PC-3 (cell line): ENCODE measurements at regions of chr5 and their contacts with region 1.

Region 1: GRCh38 chr5:4879693-4880303 is 260.3 kb upstream of the ADAMTS16 start:
- DNase-seq: peak; percentile 88
- ATAC-seq: peak; percentile 86
- H3K4me3 ChIP-seq: no peak overlapping the region
- H3K27ac ChIP-seq: no peak overlapping the region
- H3K4me1 ChIP-seq: no peaks in the 10 kb centered on the region
- H3K27me3 ChIP-seq: peaks cover 64% of the 10 kb centered on the region
- CTCF ChIP-seq: peak; percentile 93

Region 2: DNA sequence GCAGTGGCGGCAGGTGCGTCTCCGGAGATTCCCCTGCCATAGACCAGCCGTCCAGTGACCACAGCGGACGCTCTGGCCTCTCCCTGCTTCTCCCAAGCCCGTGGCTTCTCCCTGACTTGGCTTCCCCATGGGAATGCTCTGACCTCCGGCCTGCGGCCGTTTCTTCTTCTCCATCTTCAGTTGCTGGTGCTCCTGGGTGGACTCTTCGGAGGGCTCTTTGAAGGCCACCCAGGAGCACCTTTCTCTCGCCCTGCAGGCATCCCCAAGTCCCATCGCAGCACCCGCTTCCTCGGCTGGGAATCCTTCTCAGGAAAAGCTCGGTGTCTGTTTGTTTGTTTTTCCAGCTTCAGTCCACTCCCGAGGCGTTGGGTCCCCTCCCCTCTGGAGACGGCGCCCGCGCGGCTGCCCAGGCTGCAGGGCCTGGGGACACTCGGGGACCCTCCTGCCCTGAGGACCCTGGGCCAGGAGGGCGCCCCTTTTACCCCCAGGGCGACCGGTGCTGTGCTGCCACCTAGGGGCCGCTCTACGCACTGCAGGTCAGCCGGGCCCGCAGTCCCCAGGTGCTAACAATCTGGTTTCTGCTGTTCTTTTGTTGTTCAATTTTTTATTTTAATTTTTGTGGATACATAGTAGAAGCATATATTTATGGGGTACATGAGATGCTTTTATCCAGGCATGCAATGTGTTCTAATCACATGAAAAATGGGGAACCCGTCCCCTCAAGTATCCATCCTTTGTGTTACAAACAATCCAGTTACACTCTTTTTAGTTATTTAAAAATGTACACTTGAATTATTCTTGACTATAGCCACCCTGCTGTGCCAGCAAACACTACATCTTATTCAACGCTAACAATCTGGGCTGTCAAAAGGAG is 62.4 kb after region 1 on chr5:
- CTCF ChIA-PET with region 1: no interaction called
- POLR2A ChIA-PET with region 1: no interaction called
- intact Hi-C with region 1: loop called (anchors 10 kb)
- DNase-seq: peak; percentile 9
- ATAC-seq: no peak
- H3K4me3 ChIP-seq: no peak overlapping the region
- H3K27ac ChIP-seq: no peak overlapping the region
- H3K4me1 ChIP-seq: no peaks in the 10 kb centered on the region
- H3K27me3 ChIP-seq: peaks cover 66% of the 10 kb centered on the region
- CTCF ChIP-seq: peak; percentile 94

Region 3: DNA sequence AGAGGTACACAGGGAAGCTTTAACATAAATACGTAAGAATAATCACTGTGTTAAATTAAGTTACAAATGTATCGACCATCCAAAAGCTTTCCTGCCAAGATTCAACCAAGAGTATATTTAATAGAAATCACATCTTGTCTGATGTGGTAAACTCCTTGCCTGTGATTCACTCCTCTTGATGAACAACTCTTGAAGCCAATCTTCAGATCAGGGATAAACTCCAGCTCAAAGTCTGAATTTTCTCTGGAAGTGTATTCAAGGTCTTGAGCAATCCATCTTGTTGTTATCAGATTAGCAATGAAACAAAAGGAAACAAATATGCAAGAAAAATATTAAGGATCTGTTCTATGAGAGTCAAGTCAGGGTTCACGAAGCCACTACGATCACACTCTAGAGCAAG is 90.4 kb after region 1 on chr5:
- CTCF ChIA-PET with region 1: no interaction called
- POLR2A ChIA-PET with region 1: no interaction called
- intact Hi-C with region 1: no loop called
- DNase-seq: no peak
- ATAC-seq: no peak
- H3K4me3 ChIP-seq: no peak overlapping the region
- H3K27ac ChIP-seq: no peak overlapping the region
- H3K4me1 ChIP-seq: no peaks in the 10 kb centered on the region
- H3K27me3 ChIP-seq: 0 out of 2 replicates have a peak, but pooled peaks cover 18% of the 10 kb centered on the region
- CTCF ChIP-seq: no peak